IMR-90 (cell line): ENCODE measurements at regions of chr9 and their contacts with region 1.

Region 1: GRCh38 chr9:12702160-12702758 is 9.1 kb downstream of the TYRP1 start:
- DNase-seq: peak; percentile 70
- ATAC-seq: peak; percentile 87
- H3K4me3 ChIP-seq: no peak overlapping the region
- H3K27ac ChIP-seq: no peak overlapping the region
- H3K4me1 ChIP-seq: no peaks in the 10 kb centered on the region; the same call in none of the 2 replicates
- H3K27me3 ChIP-seq: no peaks in the 10 kb centered on the region
- CTCF ChIP-seq: peak; percentile 76
- POLR2A ChIP-seq: no peak
- RAD21 ChIP-seq: peak; percentile 80

Region 2: GRCh38 chr9:12464910-12465512 is 237.2 kb before region 1 on chr9:
- CTCF ChIA-PET with region 1: no interaction called
- POLR2A ChIA-PET with region 1: no interaction called
- dilution Hi-C with region 1: no loop called
- in situ Hi-C with region 1: no loop called
- intact Hi-C with region 1: no loop called
- DNase-seq: peak; percentile 10
- ATAC-seq: no peak
- H3K4me3 ChIP-seq: no peak overlapping the region
- H3K27ac ChIP-seq: no peak overlapping the region
- H3K4me1 ChIP-seq: no peaks in the 10 kb centered on the region
- H3K27me3 ChIP-seq: no peaks in the 10 kb centered on the region
- CTCF ChIP-seq: peak; percentile 51
- POLR2A ChIP-seq: no peak
- RAD21 ChIP-seq: peak; percentile 44

Region 3: GRCh38 chr9:12618956-12619355 is 83.3 kb before region 1 on chr9:
- CTCF ChIA-PET with region 1: no interaction called
- POLR2A ChIA-PET with region 1: no interaction called
- dilution Hi-C with region 1: no loop called
- in situ Hi-C with region 1: no loop called
- intact Hi-C with region 1: no loop called
- DNase-seq: no peak
- ATAC-seq: no peak
- H3K4me3 ChIP-seq: no peak overlapping the region
- H3K27ac ChIP-seq: no peak overlapping the region
- H3K4me1 ChIP-seq: no peaks in the 10 kb centered on the region
- H3K27me3 ChIP-seq: no peaks in the 10 kb centered on the region
- CTCF ChIP-seq: no peak
- POLR2A ChIP-seq: no peak
- RAD21 ChIP-seq: no peak

Region 4: DNA sequence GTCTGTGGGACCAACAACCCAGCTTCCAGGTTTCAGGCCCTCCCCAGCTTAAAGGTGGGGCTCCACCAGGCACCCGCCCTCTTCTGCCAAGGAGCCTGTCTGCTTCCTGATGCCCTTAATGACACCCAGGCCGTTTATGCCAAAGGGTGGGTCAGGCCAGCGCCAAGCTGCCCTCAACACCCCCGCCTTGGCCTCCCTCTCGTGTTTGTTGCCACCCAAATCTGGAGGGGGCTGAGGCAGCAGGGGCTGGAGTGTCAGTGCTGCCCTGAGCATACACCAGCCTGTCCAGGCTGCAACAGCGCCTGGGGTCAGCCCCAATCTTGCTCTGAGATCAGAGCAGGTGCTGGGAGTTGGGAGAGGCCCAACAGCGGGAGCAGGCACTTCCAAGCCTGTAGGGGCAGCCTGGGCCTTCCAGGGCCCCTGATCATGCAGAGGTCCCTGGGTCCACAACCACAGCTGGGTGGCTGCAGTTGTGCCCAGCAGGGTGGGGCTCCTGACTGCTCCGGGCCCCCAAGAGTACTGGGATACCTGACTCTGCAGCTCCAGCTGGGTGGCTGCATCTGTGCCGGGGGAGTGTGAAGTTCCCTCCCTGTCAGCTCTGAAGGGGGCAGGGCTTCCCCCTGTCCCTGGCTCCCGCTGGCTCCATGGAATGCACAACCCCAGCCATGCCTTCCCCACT is 43.6 kb before region 1 on chr9:
- CTCF ChIA-PET with region 1: no interaction called
- POLR2A ChIA-PET with region 1: no interaction called
- dilution Hi-C with region 1: no loop called
- in situ Hi-C with region 1: no loop called
- intact Hi-C with region 1: no loop called
- DNase-seq: no peak
- ATAC-seq: no peak
- H3K4me3 ChIP-seq: no peak overlapping the region
- H3K27ac ChIP-seq: no peak overlapping the region
- H3K4me1 ChIP-seq: no peaks in the 10 kb centered on the region
- H3K27me3 ChIP-seq: no peaks in the 10 kb centered on the region
- CTCF ChIP-seq: no peak
- POLR2A ChIP-seq: no peak
- RAD21 ChIP-seq: no peak

Region 5: DNA sequence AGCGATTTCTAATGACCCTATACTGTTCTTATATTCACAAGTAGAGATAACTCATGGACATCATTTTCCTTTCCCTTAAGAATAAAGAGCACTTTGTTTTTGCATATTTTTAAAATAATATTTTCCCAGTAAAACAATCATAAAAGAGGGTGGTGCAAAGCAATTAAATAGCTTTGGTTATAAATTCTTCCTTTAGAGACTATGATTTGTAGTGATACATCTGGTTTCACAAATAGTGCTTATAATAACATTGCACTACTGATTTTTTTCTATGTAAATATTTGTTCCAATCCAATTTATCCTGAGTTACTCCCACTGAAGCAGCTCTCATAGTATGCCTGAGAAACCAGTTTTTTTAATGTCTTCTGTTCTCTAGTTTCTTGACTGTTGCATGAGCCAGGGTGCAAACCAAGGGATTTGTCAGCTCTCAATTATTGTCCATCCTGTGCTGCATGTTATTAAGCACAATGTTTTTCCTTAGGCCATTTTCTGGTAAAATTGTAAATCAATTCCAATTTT is 147.3 kb after region 1 on chr9:
- CTCF ChIA-PET with region 1: no interaction called
- POLR2A ChIA-PET with region 1: no interaction called
- dilution Hi-C with region 1: no loop called
- in situ Hi-C with region 1: no loop called
- intact Hi-C with region 1: no loop called
- DNase-seq: peak; percentile 45
- ATAC-seq: peak; percentile 86
- H3K4me3 ChIP-seq: no peak overlapping the region
- H3K27ac ChIP-seq: no peak overlapping the region
- H3K4me1 ChIP-seq: no peaks in the 10 kb centered on the region
- H3K27me3 ChIP-seq: no peaks in the 10 kb centered on the region
- CTCF ChIP-seq: no peak
- POLR2A ChIP-seq: no peak
- RAD21 ChIP-seq: no peak

Region 6: GRCh38 chr9:13088720-13089427 is 386.6 kb after region 1 on chr9:
- CTCF ChIA-PET with region 1: interaction called, 4 read pairs
- POLR2A ChIA-PET with region 1: no interaction called
- dilution Hi-C with region 1: no loop called
- in situ Hi-C with region 1: no loop called
- intact Hi-C with region 1: loop called (anchors 5 kb)
- DNase-seq: peak; percentile 57
- ATAC-seq: peak; percentile 85
- H3K4me3 ChIP-seq: peak overlapping the region; percentile 38; the same call in 1 of the 2 replicates
- H3K27ac ChIP-seq: no peak overlapping the region
- H3K4me1 ChIP-seq: no peaks in the 10 kb centered on the region
- H3K27me3 ChIP-seq: no peaks in the 10 kb centered on the region
- CTCF ChIP-seq: peak; percentile 67
- POLR2A ChIP-seq: no peak
- RAD21 ChIP-seq: peak; percentile 66